Mammary epithelial cell (primary cell): ENCODE measurements at regions of chr3 and their contacts with region 1.

Region 1: GRCh38 chr3:185460719-185461350 is 38.0 kb downstream of the TMEM41A start:
- DNase-seq: peak; percentile 11
- H3K4me3 ChIP-seq: no peak overlapping the region
- H3K27ac ChIP-seq: no peak overlapping the region
- H3K4me1 ChIP-seq: no peaks in the 10 kb centered on the region
- H3K27me3 ChIP-seq: no peaks in the 10 kb centered on the region
- CTCF ChIP-seq: peak; percentile 25 to 50

Region 2: DNA sequence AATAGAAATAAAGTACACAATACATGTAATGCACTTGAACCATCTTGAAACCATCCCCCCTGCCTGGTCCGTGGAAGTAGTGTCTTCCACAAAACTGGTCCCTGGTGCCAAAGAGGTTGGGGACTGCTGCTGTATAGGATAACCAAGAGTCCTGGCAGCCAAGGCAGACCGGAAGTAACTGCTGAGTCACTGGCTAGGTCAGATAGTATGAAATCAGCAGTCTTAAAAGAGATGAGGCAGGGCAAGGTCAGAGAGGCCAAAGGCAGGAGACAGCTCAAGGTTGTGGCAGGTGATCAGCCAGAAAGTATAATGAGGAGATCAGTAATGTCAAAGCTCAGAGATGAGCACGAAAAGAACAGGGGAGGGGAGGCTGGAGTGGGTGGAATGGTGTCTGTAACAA is 37.7 kb before region 1 on chr3:
- CTCF ChIA-PET with region 1: no interaction called
- dilution Hi-C with region 1: no loop called
- in situ Hi-C with region 1: no loop called
- intact Hi-C with region 1: no loop called
- DNase-seq: peak; percentile 16
- H3K4me3 ChIP-seq: no peak overlapping the region
- H3K27ac ChIP-seq: no peak overlapping the region
- H3K4me1 ChIP-seq: peaks cover 10% of the 10 kb centered on the region
- H3K27me3 ChIP-seq: no peaks in the 10 kb centered on the region
- CTCF ChIP-seq: no peak

Region 3: GRCh38 chr3:185558395-185558794 is 97.6 kb after region 1 on chr3:
- CTCF ChIA-PET with region 1: interaction called, 4 read pairs
- dilution Hi-C with region 1: no loop called
- in situ Hi-C with region 1: no loop called
- intact Hi-C with region 1: loop called (anchors 1 kb)
- DNase-seq: peak; percentile 68
- H3K4me3 ChIP-seq: no peak overlapping the region
- H3K27ac ChIP-seq: peak overlapping the region; percentile 38
- H3K4me1 ChIP-seq: peaks cover 9% of the 10 kb centered on the region
- H3K27me3 ChIP-seq: no peaks in the 10 kb centered on the region
- CTCF ChIP-seq: no peak

Region 4: GRCh38 chr3:185572183-185572582 is 111.3 kb after region 1 on chr3:
- CTCF ChIA-PET with region 1: interaction called, 4 read pairs
- dilution Hi-C with region 1: no loop called
- in situ Hi-C with region 1: no loop called
- intact Hi-C with region 1: loop called (anchors 1 kb)
- DNase-seq: no peak
- H3K4me3 ChIP-seq: no peak overlapping the region
- H3K27ac ChIP-seq: no peak overlapping the region
- H3K4me1 ChIP-seq: no peaks in the 10 kb centered on the region
- H3K27me3 ChIP-seq: no peaks in the 10 kb centered on the region
- CTCF ChIP-seq: no peak